Naive thymus-derived CD4-positive, alpha-beta T cell (primary cell): ENCODE measurements at regions of chr11 and their contacts with region 1.

Region 1: GRCh38 chr11:65013692-65014145 is 241 bp upstream of the ARL2 start:
- DNase-seq: peak in 8 of 9 donors; percentile 77 to 93 (median 90)
- ATAC-seq: peak; percentile 94
- H3K4me3 ChIP-seq: peak overlapping the region; percentile 97
- H3K4me3 Mint-ChIP-seq: peak overlapping the region; percentile 90 to 95 (median 92)
- H3K27ac ChIP-seq: peak overlapping the region; percentile 84
- H3K27ac Mint-ChIP-seq: peak overlapping the region; percentile 89 to 99 (median 95)
- H3K4me1 ChIP-seq: peaks cover 4 to 9% of the 10 kb centered on the region in 2 donors
- H3K4me1 Mint-ChIP-seq: peaks cover 14 to 33% (median 29%) of the 10 kb centered on the region in 7 donors
- H3K27me3 ChIP-seq: no peaks in the 10 kb centered on the region
- H3K27me3 Mint-ChIP-seq: no peaks in the 10 kb centered on the region

Region 2: DNA sequence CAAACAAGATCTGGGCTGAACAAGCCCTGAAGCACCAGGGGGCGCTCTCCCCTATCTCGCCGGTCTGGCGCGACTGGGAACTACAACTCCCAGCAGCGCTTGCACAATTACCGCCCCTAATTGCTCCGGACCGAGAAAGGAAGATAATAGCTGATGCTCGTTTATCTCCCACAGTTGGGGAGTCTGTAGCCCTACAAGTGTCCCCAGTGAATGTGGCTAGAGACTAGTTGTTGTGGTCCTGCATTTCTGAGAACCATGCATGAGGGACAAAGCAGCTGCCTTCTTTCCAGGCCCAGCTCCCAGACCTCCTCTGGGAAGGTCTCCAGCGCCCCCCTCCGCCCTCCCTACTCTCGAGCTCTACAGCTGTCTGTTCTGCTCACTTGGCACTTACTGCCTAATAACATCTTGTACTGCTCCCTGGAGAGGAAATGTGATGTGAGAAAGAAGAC is 325.2 kb before region 1 on chr11:
- CTCF ChIA-PET with region 1: no interaction called
- POLR2A ChIA-PET with region 1: no interaction called
- intact Hi-C with region 1: loop called in 1 of 2 experiments (anchors 5 kb)
- DNase-seq: peak; percentile 76 to 91 (median 86)
- ATAC-seq: peak; percentile 99
- H3K4me3 ChIP-seq: peak overlapping the region; percentile 53
- H3K4me3 Mint-ChIP-seq: peak overlapping the region; percentile 30 to 76 (median 58)
- H3K27ac ChIP-seq: no peak overlapping the region
- H3K27ac Mint-ChIP-seq: peak overlapping the region in 5 of 9 donors; percentile 13 to 80 (median 25)
- H3K4me1 ChIP-seq: peaks cover 6 to 7% of the 10 kb centered on the region in 2 donors
- H3K4me1 Mint-ChIP-seq: peaks cover 9 to 29% (median 23%) of the 10 kb centered on the region in 7 donors
- H3K27me3 ChIP-seq: peaks cover under 1 to 2% of the 10 kb centered on the region in 2 donors
- H3K27me3 Mint-ChIP-seq: peaks cover 16 to 40% (median 18%) of the 10 kb centered on the region in 5 donors

Region 3: DNA sequence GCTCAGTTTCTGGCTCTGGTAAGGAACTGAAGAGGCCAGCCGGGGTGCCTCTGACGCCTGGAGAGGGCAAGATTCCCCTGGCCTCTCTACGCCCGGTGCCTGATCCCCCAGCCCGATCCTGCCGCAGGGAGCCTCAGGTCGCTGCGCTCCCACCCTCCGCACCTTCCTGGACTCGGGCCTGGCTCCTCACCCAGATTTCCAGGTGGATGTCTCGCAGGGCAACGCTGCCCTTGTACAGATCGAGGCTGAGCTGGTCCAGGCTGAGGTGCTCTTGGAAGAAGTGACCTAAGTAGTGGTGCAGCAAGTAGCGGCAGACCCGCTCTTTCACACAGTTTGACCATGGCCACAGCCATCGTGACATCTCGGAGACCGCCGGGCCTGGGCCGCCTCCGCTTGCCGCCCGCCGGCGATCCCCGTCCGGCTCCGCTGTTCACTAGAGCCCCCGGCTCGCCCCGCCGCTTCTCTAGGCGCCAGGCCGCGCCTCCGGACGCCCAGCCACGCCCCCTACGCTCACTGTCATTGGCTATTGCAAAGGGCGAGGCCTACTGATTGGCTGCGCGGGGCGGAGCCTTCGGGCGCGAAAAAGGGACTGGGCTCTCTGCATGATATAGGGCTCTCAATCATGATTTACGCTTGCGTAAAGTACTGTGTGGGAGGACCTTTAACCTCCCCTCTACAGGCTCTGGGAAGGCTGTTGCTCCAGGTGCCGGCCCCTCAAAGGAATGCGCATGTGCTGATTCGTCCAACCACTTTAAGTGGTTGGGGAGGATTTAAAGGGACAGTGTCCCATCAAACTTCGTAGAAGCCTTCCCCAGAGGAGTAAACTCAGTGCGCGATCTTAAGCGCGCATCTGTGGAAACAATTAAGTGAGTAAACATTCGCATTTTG is 96.7 kb before region 1 on chr11 and contains the start of gene ATG2A:
- CTCF ChIA-PET with region 1: no interaction called
- POLR2A ChIA-PET with region 1: no interaction called
- intact Hi-C with region 1: loop called (anchors 1 kb)
- DNase-seq: peak; percentile 95 to 100 (median 99)
- ATAC-seq: peak; percentile 97
- H3K4me3 ChIP-seq: peak within 1 kb of the TSS; percentile 92
- H3K4me3 Mint-ChIP-seq: peak within 1 kb of the TSS; percentile 88 to 98 (median 91)
- H3K27ac ChIP-seq: peak within 1 kb of the TSS; percentile 83
- H3K27ac Mint-ChIP-seq: peak within 1 kb of the TSS; percentile 81 to 99 (median 91)
- H3K4me1 ChIP-seq: peaks cover 18 to 22% of the 10 kb centered on the region in 2 donors
- H3K4me1 Mint-ChIP-seq: peaks cover 14 to 33% (median 25%) of the 10 kb centered on the region in 7 donors
- H3K27me3 ChIP-seq: no peaks in the 10 kb centered on the region
- H3K27me3 Mint-ChIP-seq: no peaks in the 10 kb centered on the region
- total RNA-seq, gene ATG2A: 30.6 to 105 (median 36.2) TPM

Region 4: DNA sequence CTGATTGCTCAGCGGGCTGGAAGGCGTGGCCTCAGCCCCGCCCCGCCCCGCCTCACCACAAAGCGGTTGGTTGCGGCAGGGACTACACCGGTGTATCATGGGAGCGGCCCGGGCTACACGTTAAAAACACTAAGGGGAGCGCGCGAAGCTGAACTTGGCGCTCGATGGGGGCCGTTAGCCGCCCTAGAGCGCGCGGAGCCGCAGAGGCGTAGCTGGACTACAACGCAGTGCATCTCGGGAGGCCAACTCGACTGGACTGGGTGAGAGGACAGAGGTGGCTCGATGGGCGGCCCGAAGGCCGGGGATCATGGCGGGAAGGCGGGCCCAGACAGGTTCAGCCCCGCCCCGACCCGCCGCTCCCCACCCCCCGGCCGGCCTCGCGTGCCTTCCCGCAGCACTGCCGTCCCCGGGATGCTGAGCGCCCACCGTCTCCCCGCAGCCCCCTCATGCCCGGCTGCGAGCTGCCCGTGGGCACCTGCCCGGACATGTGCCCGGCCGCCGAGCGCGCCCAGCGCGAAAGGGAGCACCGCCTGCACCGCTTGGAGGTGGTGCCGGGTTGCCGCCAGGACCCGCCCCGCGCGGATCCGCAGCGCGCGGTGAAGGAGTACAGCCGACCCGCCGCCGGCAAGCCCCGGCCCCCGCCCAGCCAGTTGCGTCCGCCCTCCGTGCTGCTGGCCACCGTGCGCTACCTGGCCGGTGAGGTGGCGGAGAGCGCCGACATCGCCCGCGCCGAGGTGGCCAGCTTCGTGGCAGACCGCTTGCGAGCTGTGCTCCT is 27.3 kb after region 1 on chr11 and contains the start of gene SAC3D1:
- CTCF ChIA-PET with region 1: interaction called, 6 read pairs
- POLR2A ChIA-PET with region 1: interaction called, 3 read pairs
- intact Hi-C with region 1: loop called (anchors 1 kb)
- DNase-seq: peak; percentile 74 to 94 (median 88)
- ATAC-seq: peak; percentile 95
- H3K4me3 ChIP-seq: peak within 1 kb of the TSS; percentile 86
- H3K4me3 Mint-ChIP-seq: peak within 1 kb of the TSS; percentile 90 to 96 (median 94)
- H3K27ac ChIP-seq: peak within 1 kb of the TSS; percentile 78
- H3K27ac Mint-ChIP-seq: peak within 1 kb of the TSS; percentile 69 to 95 (median 92)
- H3K4me1 ChIP-seq: peaks cover 3 to 9% of the 10 kb centered on the region in 2 donors
- H3K4me1 Mint-ChIP-seq: peaks cover 11 to 25% (median 20%) of the 10 kb centered on the region in 7 donors
- H3K27me3 ChIP-seq: no peaks in the 10 kb centered on the region
- H3K27me3 Mint-ChIP-seq: no peaks in the 10 kb centered on the region
- total RNA-seq, gene SAC3D1: 2.7 to 18.2 (median 8.6) TPM

Region 5: GRCh38 chr11:65083834-65084597 is 70.3 kb after region 1 on chr11 and contains the starts of genes CDCA5 and ZFPL1:
- CTCF ChIA-PET with region 1: interaction called, 7 read pairs
- POLR2A ChIA-PET with region 1: interaction called, 4 read pairs
- intact Hi-C with region 1: loop called (anchors 1 kb)
- DNase-seq: peak; percentile 94 to 98 (median 97)
- ATAC-seq: peak; percentile 96
- H3K4me3 ChIP-seq: peak within 1 kb of the TSS; percentile 61
- H3K4me3 Mint-ChIP-seq: peak within 1 kb of the TSS; percentile 88 to 99 (median 93)
- H3K27ac ChIP-seq: peak within 1 kb of the TSS; percentile 86
- H3K27ac Mint-ChIP-seq: peak within 1 kb of the TSS; percentile 94 to 99 (median 97)
- H3K4me1 ChIP-seq: peaks cover 13 to 14% of the 10 kb centered on the region in 2 donors
- H3K4me1 Mint-ChIP-seq: peaks cover 20 to 49% (median 27%) of the 10 kb centered on the region in 7 donors
- H3K27me3 ChIP-seq: no peaks in the 10 kb centered on the region
- H3K27me3 Mint-ChIP-seq: peaks cover 0 to 4% (median 0%) of the 10 kb centered on the region in 5 donors
- total RNA-seq, gene CDCA5: 0.56 to 68.1 (median 0.81) TPM
- total RNA-seq, gene ZFPL1: 29.9 to 53.0 (median 49.3) TPM

Region 6: DNA sequence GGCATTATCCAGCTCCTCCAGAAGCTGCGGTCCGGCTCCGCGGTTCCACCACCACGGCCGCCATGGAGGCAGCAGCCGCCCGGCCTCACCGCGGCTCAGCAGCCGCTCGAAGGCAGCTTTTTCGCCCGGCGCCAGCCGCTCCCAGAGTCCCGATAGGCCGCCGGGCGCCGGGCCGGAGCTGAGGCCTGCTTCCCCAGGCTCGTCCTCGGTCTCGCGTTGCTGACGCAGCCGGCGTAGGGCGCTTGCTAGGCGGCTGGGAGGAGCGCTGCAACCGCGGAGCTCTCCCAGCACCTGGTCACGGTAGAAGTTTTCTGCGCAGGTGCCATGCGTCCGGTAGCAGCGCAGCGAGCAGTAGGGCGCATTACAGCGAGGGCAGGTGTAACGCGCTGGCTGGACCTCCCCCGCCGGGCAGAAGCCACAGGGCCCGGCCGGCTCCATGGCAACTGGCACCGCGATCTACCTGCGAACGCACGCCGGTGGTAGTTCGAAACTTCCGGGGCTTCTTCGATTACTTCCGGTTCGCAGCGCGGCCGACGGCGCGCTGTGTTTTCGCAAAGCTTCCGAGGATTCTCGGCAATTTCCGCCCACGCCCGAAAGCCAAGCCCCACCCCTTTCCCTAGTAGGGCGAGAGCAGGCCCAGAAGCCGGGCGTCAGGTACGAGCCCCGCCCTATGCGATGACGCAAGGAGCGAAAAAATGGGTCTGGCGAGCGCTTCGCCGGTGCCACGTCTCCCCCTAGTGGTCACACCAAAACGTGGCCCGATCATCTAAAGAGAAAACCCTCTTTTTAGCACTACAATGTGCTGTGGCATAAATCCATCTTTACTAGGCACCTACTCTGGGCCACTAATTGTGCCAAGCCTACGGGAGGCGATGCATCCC is 103.7 kb after region 1 on chr11 and contains the start of gene ZNHIT2:
- CTCF ChIA-PET with region 1: interaction called, 10 read pairs
- POLR2A ChIA-PET with region 1: interaction called, 17 read pairs
- intact Hi-C with region 1: loop called (anchors 1 kb)
- DNase-seq: peak; percentile 94 to 100 (median 100)
- ATAC-seq: peak; percentile 85
- H3K4me3 ChIP-seq: peak within 1 kb of the TSS; percentile 92
- H3K4me3 Mint-ChIP-seq: peak within 1 kb of the TSS; percentile 91 to 95 (median 92)
- H3K27ac ChIP-seq: peak within 1 kb of the TSS; percentile 99
- H3K27ac Mint-ChIP-seq: peak within 1 kb of the TSS; percentile 86 to 100 (median 96)
- H3K4me1 ChIP-seq: peaks cover 28 to 37% of the 10 kb centered on the region in 2 donors
- H3K4me1 Mint-ChIP-seq: peaks cover 20 to 77% (median 53%) of the 10 kb centered on the region in 7 donors
- H3K27me3 ChIP-seq: no peaks in the 10 kb centered on the region
- H3K27me3 Mint-ChIP-seq: no peaks in the 10 kb centered on the region
- total RNA-seq, gene ZNHIT2: 9.9 to 18.2 (median 11.3) TPM

Region 7: GRCh38 chr11:65290448-65291165 is 276.9 kb after region 1 on chr11:
- CTCF ChIA-PET with region 1: no interaction called
- POLR2A ChIA-PET with region 1: no interaction called
- intact Hi-C with region 1: no loop called
- DNase-seq: no peak
- ATAC-seq: peak; percentile 93
- H3K4me3 ChIP-seq: no peak overlapping the region
- H3K4me3 Mint-ChIP-seq: peak overlapping the region in 2 of 10 donors; percentile 10 to 31
- H3K27ac ChIP-seq: no peak overlapping the region
- H3K27ac Mint-ChIP-seq: peak overlapping the region in 3 of 9 donors; percentile 27 to 58 (median 30)
- H3K4me1 ChIP-seq: no peaks in the 10 kb centered on the region
- H3K4me1 Mint-ChIP-seq: peaks cover 0 to 7% (median 0%) of the 10 kb centered on the region in 7 donors
- H3K27me3 ChIP-seq: no peaks in the 10 kb centered on the region
- H3K27me3 Mint-ChIP-seq: no peaks in the 10 kb centered on the region